Heart right ventricle (tissue), 16 donors: ENCODE measurements at regions of chr3 and their contacts with region 1.

Region 1: DNA sequence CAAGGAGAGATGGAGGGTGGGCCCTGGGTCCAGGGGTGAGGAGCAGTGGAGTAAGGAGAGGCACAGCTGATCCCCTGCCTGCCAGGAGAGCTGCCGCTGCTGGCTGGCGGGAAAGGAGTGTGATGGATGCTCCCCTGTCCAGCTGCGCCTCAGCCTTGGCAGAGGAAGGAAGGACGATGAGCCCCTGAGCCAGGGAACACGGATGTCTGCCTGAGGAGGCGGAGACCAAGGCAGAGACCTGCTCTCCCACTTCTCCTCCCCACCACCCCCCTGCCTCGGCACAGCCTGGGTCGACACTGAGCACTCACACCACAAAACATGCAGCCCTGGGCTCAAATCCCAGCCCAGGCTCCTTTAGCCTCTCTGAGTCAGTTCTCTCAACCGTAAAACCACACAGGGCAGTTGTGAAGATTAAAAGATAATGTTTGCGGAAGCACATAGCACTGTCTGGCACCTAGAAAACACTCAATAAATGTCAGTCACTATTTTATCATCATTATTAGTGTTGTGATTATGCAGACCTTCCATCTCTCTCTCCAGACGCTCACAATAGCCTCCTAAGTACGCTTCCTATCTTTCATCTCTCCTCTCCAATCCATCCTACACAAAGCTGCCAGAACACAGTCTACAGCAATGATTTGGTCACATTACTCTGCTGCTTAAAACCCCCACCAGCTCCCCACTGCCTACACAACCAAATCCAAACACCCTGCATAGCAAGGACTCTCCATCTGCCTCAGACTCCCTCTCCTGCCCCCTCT is 52.2 kb downstream of the SEMA5B start:
- DNase-seq: peak in 1 of 2 donors; percentile 27
- ATAC-seq: peak in 5 of 8 donors; percentile 3 to 31 (median 9)
- H3K4me3 ChIP-seq: no peak overlapping the region
- H3K27ac ChIP-seq: peak overlapping the region; percentile 76 to 99 (median 90)
- H3K4me1 ChIP-seq: peaks cover 21 to 90% (median 69%) of the 10 kb centered on the region in 9 donors
- H3K27me3 ChIP-seq: no peaks in the 10 kb centered on the region
- CTCF ChIP-seq: no peak

Region 2: GRCh38 chr3:122957707-122958689 is 17.3 kb before region 1 on chr3:
- intact Hi-C with region 1: loop called in 1 of 10 experiments (anchors 2 kb)
- DNase-seq: peak; percentile 54 to 59
- ATAC-seq: peak; percentile 72 to 85 (median 81)
- H3K4me3 ChIP-seq: peak overlapping the region in 1 of 10 donors; percentile 29
- H3K27ac ChIP-seq: peak overlapping the region; percentile 52 to 92 (median 85)
- H3K4me1 ChIP-seq: peaks cover 21 to 92% (median 43%) of the 10 kb centered on the region in 9 donors
- H3K27me3 ChIP-seq: no peaks in the 10 kb centered on the region
- CTCF ChIP-seq: no peak